Activated naive CD4-positive, alpha-beta T cell treated with anti-CD3 and anti-CD28 coated beads for 36 hours (primary cell): ENCODE measurements at regions of chr7 and their contacts with region 1.

Region 1: DNA sequence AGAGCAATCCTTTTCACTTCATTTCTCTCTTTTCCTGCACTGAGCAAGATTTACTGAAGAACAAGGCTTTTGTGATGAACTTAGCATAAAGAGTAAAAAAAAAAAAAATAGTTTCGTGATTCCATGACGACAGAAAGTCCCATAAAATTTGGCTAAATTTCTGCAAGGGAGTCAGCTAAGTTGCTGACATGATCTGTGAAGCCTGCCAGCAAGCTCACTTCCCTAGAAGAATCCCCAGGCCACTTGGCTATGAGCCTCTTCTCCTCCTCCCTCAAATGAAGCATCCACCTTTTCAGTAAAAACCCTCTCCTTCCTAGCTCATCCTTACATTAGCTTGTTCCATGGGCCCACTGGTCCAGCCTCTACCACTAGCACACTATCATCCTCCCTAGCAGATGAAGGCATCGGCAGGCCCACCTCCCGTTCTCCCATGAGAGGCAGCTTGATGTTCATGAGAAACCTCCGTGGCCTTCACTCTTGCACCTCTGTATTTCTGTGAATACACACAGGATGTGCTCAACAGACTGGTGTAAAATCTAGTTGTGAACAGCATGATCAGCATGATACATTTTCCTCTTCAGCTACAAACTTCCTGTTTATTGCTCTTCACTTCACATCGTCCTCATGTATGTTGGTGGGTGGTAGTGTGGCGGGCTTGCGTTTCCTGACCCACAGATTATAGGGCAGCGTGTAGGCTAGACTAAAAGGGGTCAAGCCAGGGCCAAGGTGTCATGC is 30.9 kb downstream of the GIMAP8 start:
- DNase-seq: peak; percentile 67
- H3K4me3 Mint-ChIP-seq: peak overlapping the region; percentile 69
- H3K27ac Mint-ChIP-seq: peak overlapping the region; percentile 97
- H3K4me1 Mint-ChIP-seq: peaks cover 93% of the 10 kb centered on the region
- H3K27me3 Mint-ChIP-seq: no peaks in the 10 kb centered on the region

Region 2: DNA sequence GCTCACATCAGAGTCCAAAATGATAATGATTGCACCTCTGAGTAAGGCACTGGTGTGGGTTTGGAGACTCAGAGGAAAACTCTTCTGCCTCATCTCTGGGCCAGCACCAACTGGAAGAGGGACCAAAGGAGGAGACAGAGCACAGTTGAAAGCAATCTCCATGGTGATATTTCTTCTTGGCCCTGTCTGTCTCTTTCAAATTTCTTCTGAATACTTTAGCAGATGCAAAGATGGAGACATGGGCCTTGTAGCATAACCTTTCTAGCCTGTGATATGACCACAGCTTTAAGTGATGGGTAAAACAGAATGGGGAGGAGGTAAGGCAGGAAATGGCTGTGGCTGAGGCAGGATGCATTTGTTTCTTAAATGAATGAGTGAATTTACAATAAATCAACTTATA is 21.2 kb after region 1 on chr7:
- CTCF ChIA-PET with region 1: interaction called, 4 read pairs
- intact Hi-C with region 1: loop called (anchors 2 kb)
- DNase-seq: peak; percentile 69
- H3K4me3 Mint-ChIP-seq: peak overlapping the region; percentile 41
- H3K27ac Mint-ChIP-seq: peak overlapping the region; percentile 96
- H3K4me1 Mint-ChIP-seq: peaks cover 88% of the 10 kb centered on the region
- H3K27me3 Mint-ChIP-seq: no peaks in the 10 kb centered on the region

Region 3: GRCh38 chr7:150507947-150508602 is 26.7 kb after region 1 on chr7:
- CTCF ChIA-PET with region 1: interaction called, 3 read pairs
- intact Hi-C with region 1: loop called (anchors 1 kb)
- DNase-seq: peak; percentile 61
- H3K4me3 Mint-ChIP-seq: peak overlapping the region; percentile 79
- H3K27ac Mint-ChIP-seq: peak overlapping the region; percentile 96
- H3K4me1 Mint-ChIP-seq: peaks cover 97% of the 10 kb centered on the region
- H3K27me3 Mint-ChIP-seq: no peaks in the 10 kb centered on the region